Activated CD4-positive, alpha-beta memory T cell treated with anti-CD3 and anti-CD28 coated beads for 36 hours (primary cell): ENCODE measurements at regions of chr15 and their contacts with region 1.

Region 1: DNA sequence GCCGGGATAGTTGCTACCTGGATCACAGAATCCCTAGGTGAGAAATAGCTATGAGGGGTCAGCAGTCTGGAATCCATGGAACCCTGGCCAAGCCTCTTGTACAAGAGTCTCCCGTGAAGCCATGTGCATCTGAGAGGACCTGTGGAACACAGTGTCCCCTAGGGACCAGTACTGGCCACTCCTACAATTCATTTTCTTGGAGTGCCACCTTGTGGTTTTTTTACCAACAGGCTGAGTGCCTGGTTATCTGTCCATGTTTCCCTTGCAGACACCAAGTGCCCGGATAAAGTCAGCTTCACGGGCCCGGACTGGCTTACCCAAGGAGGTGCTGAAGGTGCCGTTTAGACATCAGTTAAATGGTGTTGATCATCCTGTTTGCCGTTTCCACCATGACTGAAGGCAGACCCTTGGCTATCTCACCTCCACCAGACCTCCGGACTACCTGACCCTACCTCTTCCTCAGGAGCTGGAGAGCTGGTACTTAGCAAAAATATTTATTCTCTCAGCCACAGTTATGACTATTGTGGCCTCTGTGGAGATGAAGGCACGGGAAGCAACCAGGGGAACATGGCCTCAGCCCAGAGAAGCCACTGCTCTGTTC is 93.9 kb downstream of the RBPMS2 start:
- DNase-seq: peak; percentile 20
- H3K4me3 Mint-ChIP-seq: no peak overlapping the region
- H3K27ac Mint-ChIP-seq: no peak overlapping the region
- H3K4me1 Mint-ChIP-seq: peaks cover 2% of the 10 kb centered on the region
- H3K27me3 Mint-ChIP-seq: no peaks in the 10 kb centered on the region

Region 2: GRCh38 chr15:64430000-64430735 is 251.4 kb before region 1 on chr15:
- CTCF ChIA-PET with region 1: interaction called, 7 read pairs
- POLR2A ChIA-PET with region 1: no interaction called
- intact Hi-C with region 1: loop called (anchors 1 kb)
- DNase-seq: peak; percentile 45
- H3K4me3 Mint-ChIP-seq: no peak overlapping the region
- H3K27ac Mint-ChIP-seq: peak overlapping the region; percentile 75
- H3K4me1 Mint-ChIP-seq: peaks cover 35% of the 10 kb centered on the region
- H3K27me3 Mint-ChIP-seq: no peaks in the 10 kb centered on the region

Region 3: DNA sequence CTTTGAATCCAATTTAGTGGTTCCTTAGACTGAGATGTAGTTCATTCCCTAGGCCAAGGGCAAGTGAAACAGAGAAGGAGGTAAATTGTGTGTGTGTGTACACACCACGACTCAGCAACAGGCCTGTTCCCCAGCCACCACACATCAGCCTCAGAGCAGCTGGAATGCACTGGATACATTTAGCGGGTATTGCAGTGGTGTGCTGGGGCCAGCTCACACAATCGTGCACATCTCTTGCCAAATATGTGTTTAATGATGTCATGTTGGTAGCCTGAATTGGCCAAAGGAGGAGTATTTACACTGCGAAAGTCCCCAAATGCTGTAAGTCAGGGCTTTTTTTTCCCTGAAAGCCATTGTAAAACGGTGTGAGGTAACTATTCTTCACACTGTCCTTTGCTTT is 11.6 kb after region 1 on chr15:
- CTCF ChIA-PET with region 1: interaction called, 32 read pairs
- POLR2A ChIA-PET with region 1: no interaction called
- intact Hi-C with region 1: no loop called
- DNase-seq: no peak
- H3K4me3 Mint-ChIP-seq: no peak overlapping the region
- H3K27ac Mint-ChIP-seq: peak overlapping the region; percentile 25
- H3K4me1 Mint-ChIP-seq: peaks cover 17% of the 10 kb centered on the region
- H3K27me3 Mint-ChIP-seq: no peaks in the 10 kb centered on the region

Region 4: GRCh38 chr15:64717735-64718495 is 36.4 kb after region 1 on chr15:
- CTCF ChIA-PET with region 1: interaction called, 11 read pairs
- POLR2A ChIA-PET with region 1: no interaction called
- intact Hi-C with region 1: no loop called
- DNase-seq: no peak
- H3K4me3 Mint-ChIP-seq: no peak overlapping the region
- H3K27ac Mint-ChIP-seq: no peak overlapping the region
- H3K4me1 Mint-ChIP-seq: no peaks in the 10 kb centered on the region
- H3K27me3 Mint-ChIP-seq: no peaks in the 10 kb centered on the region

Region 5: DNA sequence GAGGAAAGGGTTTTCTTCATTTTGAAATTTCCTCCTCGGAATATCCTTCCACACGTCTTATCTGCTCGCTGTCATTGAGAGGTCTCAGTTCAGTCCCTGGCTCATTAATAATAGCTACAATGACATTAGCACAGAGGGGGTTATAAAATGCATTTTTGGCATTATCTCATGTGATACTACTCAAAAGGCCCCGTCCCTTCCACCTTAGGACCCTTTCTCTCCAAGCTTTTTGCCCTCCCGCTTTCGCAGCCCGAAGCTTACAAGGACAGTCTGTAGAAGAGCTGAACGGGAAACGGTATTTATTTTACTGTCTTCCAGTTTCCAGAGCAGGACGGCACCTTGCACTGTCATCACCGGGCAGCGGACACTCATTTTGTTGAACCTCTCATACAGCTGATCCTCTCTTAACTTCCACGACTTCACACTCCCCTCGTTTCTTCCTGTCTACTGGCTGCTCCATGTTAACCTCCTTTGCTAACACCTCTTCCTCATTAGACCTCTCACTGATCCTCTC is 154.6 kb after region 1 on chr15:
- CTCF ChIA-PET with region 1: no interaction called
- POLR2A ChIA-PET with region 1: no interaction called
- intact Hi-C with region 1: no loop called
- DNase-seq: no peak
- H3K4me3 Mint-ChIP-seq: peak overlapping the region; percentile 59
- H3K27ac Mint-ChIP-seq: peak overlapping the region; percentile 59
- H3K4me1 Mint-ChIP-seq: peaks cover 40% of the 10 kb centered on the region
- H3K27me3 Mint-ChIP-seq: no peaks in the 10 kb centered on the region